ENCODE measurements at regions of chr10 and their contacts with region 1.

Region 1: GRCh38 chr10:73879296-73880173 is 5.2 kb upstream of the CAMK2G start:
- DNase-seq: peak; percentile 88 to 99 (median 95)
- ATAC-seq: peak; percentile 85 to 91 (median 90)
- H3K4me3 ChIP-seq: no peak overlapping the region
- H3K4me3 Mint-ChIP-seq: no peak overlapping the region
- H3K27ac ChIP-seq: peak overlapping the region; percentile 50
- H3K27ac Mint-ChIP-seq: peak overlapping the region; percentile 71 to 77
- H3K4me1 ChIP-seq: peaks cover 4 to 32% of the 10 kb centered on the region in 2 experiments
- H3K4me1 Mint-ChIP-seq: peaks cover 41 to 48% (median 43%) of the 10 kb centered on the region in 3 donors
- H3K27me3 ChIP-seq: no peaks in the 10 kb centered on the region
- H3K27me3 Mint-ChIP-seq: no peaks in the 10 kb centered on the region

Region 2: DNA sequence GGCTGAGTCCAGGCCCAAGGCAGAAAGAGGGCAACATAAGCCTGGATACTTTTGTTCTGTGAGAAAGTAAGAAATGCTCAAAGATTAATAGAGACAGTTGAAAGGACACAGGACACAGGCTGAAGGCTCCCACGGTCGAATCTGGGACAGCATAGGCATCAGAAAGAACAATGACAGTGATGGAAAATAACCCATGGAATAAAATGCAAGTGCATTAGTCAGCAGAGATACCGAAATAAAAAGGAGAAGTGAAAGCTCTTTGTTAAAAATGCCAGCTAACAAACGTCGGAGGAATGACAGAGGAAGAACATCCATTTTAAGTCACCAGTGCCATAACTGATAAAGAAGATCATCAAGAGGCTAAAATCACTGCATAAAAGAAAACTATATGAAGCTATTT is 162.0 kb before region 1 on chr10:
- CTCF ChIA-PET with region 1: no interaction called
- POLR2A ChIA-PET with region 1: no interaction called
- DNase-seq: no peak
- ATAC-seq: no peak
- H3K4me3 ChIP-seq: no peak overlapping the region
- H3K4me3 Mint-ChIP-seq: no peak overlapping the region
- H3K27ac ChIP-seq: no peak overlapping the region
- H3K27ac Mint-ChIP-seq: no peak overlapping the region
- H3K4me1 ChIP-seq: no peaks in the 10 kb centered on the region
- H3K4me1 Mint-ChIP-seq: peaks cover 0 to 3% (median 0%) of the 10 kb centered on the region in 3 donors
- H3K27me3 ChIP-seq: no peaks in the 10 kb centered on the region
- H3K27me3 Mint-ChIP-seq: no peaks in the 10 kb centered on the region

Region 3: DNA sequence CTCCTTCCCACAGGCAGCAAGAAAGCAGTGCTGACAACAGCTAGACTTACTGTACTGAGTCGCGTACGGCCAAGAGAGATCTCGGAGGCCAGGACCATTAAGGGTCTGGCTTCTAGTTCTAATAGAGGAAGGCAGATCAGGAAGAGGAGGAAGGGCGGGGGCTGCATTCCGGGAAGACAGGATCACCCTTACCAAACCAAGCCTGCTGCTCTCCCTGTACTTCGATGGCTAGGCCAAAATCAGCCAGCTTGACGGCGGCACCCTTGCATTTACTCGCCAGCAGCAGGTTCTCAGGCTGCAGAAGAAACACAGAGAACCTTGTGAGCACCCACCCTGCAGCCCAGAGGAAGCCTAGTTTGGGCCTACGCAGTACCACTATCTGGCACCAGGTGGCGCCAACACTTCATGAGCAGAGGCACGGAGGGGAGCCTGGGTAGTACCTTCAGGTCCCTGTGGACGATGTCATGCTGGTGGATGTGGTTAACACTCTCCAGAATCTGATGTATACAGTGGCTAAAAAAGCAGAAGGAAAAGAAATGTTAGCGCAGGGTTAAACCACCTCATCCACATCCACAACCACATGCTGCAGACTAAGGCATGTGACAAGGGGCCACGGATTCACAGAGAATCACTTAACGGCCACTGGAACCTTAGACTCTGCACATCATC is 30.6 kb before region 1 on chr10:
- CTCF ChIA-PET with region 1: interaction called, 77 to 80 read pairs
- POLR2A ChIA-PET with region 1: interaction called in 1 of 2 experiments, 6 read pairs
- DNase-seq: peak; percentile 78 to 95 (median 89)
- ATAC-seq: peak; percentile 99 to 100 (median 99)
- H3K4me3 ChIP-seq: no peak overlapping the region
- H3K4me3 Mint-ChIP-seq: peak overlapping the region in 1 of 3 donors; percentile 20
- H3K27ac ChIP-seq: peak overlapping the region; percentile 68
- H3K27ac Mint-ChIP-seq: peak overlapping the region; percentile 84 to 86
- H3K4me1 ChIP-seq: peaks cover 5 to 19% of the 10 kb centered on the region in 2 experiments
- H3K4me1 Mint-ChIP-seq: peaks cover 12 to 18% (median 15%) of the 10 kb centered on the region in 3 donors
- H3K27me3 ChIP-seq: no peaks in the 10 kb centered on the region
- H3K27me3 Mint-ChIP-seq: no peaks in the 10 kb centered on the region

Region 4: DNA sequence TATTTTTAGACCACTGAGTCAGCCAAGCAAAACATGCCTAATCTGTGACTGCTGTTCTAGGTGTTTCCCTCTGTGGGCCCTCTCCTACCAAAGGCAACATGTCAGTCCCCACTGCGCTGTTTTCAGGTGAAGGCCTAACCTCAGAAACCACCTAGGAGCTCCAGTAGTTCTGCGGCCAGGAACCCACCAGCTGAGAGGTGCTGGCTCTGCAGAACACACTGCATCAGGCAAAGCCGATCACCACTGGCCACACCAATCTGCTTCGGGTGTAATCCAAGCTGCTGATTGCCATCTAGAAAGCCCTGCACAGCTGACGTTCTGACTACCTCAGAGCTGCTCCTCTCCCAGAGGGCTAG is 20.1 kb before region 1 on chr10:
- CTCF ChIA-PET with region 1: interaction called, 3 to 21 read pairs
- POLR2A ChIA-PET with region 1: interaction called in 1 of 2 experiments, 5 read pairs
- DNase-seq: peak in 28 of 35 experiments; percentile 15 to 63 (median 30)
- ATAC-seq: peak; percentile 79 to 93 (median 82)
- H3K4me3 ChIP-seq: no peak overlapping the region
- H3K4me3 Mint-ChIP-seq: peak overlapping the region in 2 of 3 donors; percentile 43 to 51
- H3K27ac ChIP-seq: peak overlapping the region; percentile 67
- H3K27ac Mint-ChIP-seq: peak overlapping the region; percentile 94 to 95
- H3K4me1 ChIP-seq: peaks cover 4 to 72% of the 10 kb centered on the region in 2 experiments
- H3K4me1 Mint-ChIP-seq: peaks cover 69 to 87% (median 86%) of the 10 kb centered on the region in 3 donors
- H3K27me3 ChIP-seq: no peaks in the 10 kb centered on the region
- H3K27me3 Mint-ChIP-seq: no peaks in the 10 kb centered on the region

Region 5: DNA sequence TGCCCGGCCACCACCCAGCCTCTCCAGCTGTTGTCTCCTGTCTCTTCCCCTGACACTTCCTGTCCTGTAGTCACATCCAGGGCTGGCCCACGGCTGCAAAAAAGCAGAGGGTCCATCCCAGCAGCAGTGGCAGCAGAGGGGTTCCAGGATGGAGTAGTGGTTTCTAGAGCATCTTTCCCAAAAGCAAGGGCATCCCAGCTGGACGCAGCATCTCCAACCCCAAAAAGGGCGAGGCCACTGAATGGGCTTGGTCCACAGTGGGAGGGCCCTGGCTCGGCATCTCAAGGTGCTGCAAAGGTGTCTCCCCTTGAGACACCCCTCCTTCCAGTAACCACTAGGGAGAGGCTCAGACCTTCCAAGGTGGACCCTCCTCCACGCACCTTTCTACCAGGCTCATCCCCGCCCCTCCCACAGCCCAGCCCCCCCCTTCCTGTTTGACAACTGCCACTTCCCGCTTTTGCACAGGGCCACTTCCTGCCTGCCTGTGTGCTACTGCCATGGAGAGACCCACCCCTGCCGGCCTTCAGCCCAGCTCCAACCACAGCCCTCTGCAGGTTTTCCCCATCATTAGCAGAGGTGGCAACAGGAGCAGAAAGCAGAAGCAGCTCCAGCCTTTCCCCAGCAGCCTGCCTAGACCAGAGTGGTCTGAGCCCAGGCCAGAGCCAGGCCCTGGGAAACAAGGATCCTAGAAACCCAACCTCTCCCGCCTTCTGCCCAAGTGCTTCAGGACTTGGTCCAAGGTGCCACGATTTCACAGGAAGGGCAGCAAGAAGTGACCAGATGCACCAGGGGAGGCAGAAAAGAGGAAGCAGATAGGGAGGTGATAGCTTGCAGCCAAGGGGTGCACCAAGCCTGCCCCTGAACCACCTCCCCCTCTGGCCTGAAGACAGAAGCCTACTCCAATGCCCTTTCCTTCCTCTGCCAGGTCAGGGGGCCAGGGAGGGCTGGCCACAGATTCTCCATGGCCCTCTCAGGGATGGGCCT is 13.8 kb before region 1 on chr10:
- CTCF ChIA-PET with region 1: interaction called, 5 to 21 read pairs
- POLR2A ChIA-PET with region 1: interaction called in 1 of 2 experiments, 5 read pairs
- DNase-seq: peak in 34 of 35 experiments; percentile 28 to 67 (median 47)
- ATAC-seq: peak; percentile 82 to 91 (median 86)
- H3K4me3 ChIP-seq: peak overlapping the region; percentile 48 to 49
- H3K4me3 Mint-ChIP-seq: peak overlapping the region; percentile 75 to 89 (median 80)
- H3K27ac ChIP-seq: peak overlapping the region; percentile 80
- H3K27ac Mint-ChIP-seq: peak overlapping the region; percentile 97 to 98
- H3K4me1 ChIP-seq: peaks cover 21 to 84% of the 10 kb centered on the region in 2 experiments
- H3K4me1 Mint-ChIP-seq: peaks cover 78 to 94% (median 91%) of the 10 kb centered on the region in 3 donors
- H3K27me3 ChIP-seq: no peaks in the 10 kb centered on the region
- H3K27me3 Mint-ChIP-seq: no peaks in the 10 kb centered on the region

Region 6: DNA sequence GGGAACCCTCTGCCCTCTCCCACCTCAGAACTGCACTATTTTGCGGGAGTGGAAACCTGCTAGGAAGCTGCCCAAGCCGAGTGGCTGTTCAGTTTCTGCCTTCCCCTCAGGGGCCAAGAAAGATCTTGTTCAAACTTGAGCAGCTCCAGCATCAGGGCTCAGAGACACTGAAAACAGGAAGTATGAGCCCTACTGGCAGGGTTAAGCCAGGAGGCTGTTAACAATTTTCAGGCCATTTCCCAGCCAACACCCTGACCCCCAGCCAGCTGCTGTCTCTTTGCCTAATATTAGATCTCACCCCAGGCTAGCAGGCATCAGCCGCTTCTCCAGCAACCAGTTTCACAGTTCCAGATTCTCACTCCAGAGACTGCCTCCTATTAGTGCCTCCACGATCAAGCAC is 40.6 kb after region 1 on chr10:
- CTCF ChIA-PET with region 1: no interaction called
- POLR2A ChIA-PET with region 1: no interaction called
- DNase-seq: peak in 6 of 35 experiments; percentile 6 to 35 (median 20)
- ATAC-seq: peak; percentile 36 to 59 (median 48)
- H3K4me3 ChIP-seq: no peak overlapping the region
- H3K4me3 Mint-ChIP-seq: peak overlapping the region in 1 of 3 donors; percentile 78
- H3K27ac ChIP-seq: no peak overlapping the region
- H3K27ac Mint-ChIP-seq: peak overlapping the region in 1 of 2 donors; percentile 19
- H3K4me1 ChIP-seq: peaks cover 14 to 38% of the 10 kb centered on the region in 2 experiments
- H3K4me1 Mint-ChIP-seq: peaks cover 26 to 47% (median 39%) of the 10 kb centered on the region in 3 donors
- H3K27me3 ChIP-seq: peaks cover 0 to 35% of the 10 kb centered on the region in 2 experiments
- H3K27me3 Mint-ChIP-seq: peaks cover 17 to 23% of the 10 kb centered on the region in 2 donors

Region 7: DNA sequence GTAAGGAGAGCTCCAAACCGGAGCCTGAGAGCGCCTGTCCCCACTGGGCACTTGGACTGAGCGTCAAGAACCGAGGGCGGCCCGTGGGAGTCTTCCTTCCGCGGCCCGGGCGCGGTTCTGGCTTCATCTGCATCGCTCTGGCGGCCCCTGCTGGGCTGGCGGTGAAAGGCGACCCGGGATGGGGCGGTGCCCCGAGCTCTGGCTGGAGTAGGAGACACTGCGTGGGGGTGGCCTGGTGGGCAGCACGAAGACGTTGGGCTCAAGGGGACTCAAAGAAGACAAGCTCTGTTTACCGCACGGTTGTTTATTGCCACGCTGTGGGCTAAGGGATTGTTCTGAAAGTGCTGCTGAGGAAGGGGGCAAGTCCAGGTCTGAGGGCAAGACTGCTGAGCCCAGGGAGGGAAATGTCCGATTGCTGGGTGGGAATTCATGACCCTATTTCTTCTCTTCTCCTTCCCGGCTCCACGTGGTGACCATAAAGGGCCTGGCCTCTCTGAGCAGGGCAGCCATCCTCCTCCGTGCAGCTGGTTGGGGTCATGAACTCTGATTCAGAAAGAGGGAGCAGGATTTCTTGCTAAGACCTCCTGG is 61.2 kb after region 1 on chr10:
- CTCF ChIA-PET with region 1: interaction called, 24 to 35 read pairs
- POLR2A ChIA-PET with region 1: interaction called in 1 of 2 experiments, 3 read pairs
- DNase-seq: peak; percentile 53 to 88 (median 79)
- ATAC-seq: peak; percentile 98 to 100 (median 98)
- H3K4me3 ChIP-seq: peak overlapping the region in 1 of 2 donors; percentile 5
- H3K4me3 Mint-ChIP-seq: peak overlapping the region; percentile 36 to 37 (median 37)
- H3K27ac ChIP-seq: no peak overlapping the region
- H3K27ac Mint-ChIP-seq: peak overlapping the region in 1 of 2 donors; percentile 58
- H3K4me1 ChIP-seq: peaks cover 0 to 9% of the 10 kb centered on the region in 2 experiments
- H3K4me1 Mint-ChIP-seq: peaks cover 5 to 8% (median 7%) of the 10 kb centered on the region in 3 donors
- H3K27me3 ChIP-seq: peaks cover 0 to 2% of the 10 kb centered on the region in 2 experiments
- H3K27me3 Mint-ChIP-seq: no peaks in the 10 kb centered on the region

Region 8: GRCh38 chr10:73956476-73957359 is 77.2 kb after region 1 on chr10:
- CTCF ChIA-PET with region 1: interaction called, 9 to 10 read pairs
- POLR2A ChIA-PET with region 1: no interaction called
- DNase-seq: peak in 30 of 35 experiments; percentile 4 to 66 (median 22)
- ATAC-seq: peak; percentile 74 to 83 (median 79)
- H3K4me3 ChIP-seq: peak overlapping the region; percentile 17 to 25
- H3K4me3 Mint-ChIP-seq: peak overlapping the region; percentile 47 to 70 (median 67)
- H3K27ac ChIP-seq: peak overlapping the region; percentile 78
- H3K27ac Mint-ChIP-seq: peak overlapping the region; percentile 91 to 97
- H3K4me1 ChIP-seq: peaks cover 15 to 57% of the 10 kb centered on the region in 2 experiments
- H3K4me1 Mint-ChIP-seq: peaks cover 48 to 61% (median 54%) of the 10 kb centered on the region in 3 donors
- H3K27me3 ChIP-seq: no peaks in the 10 kb centered on the region
- H3K27me3 Mint-ChIP-seq: no peaks in the 10 kb centered on the region

Region 9: GRCh38 chr10:74081192-74081803 is 201.8 kb after region 1 on chr10:
- CTCF ChIA-PET with region 1: interaction called in 1 of 2 experiments, 11 read pairs
- POLR2A ChIA-PET with region 1: interaction called in 1 of 2 experiments, 3 read pairs
- DNase-seq: peak in 25 of 35 experiments; percentile 6 to 66 (median 23)
- ATAC-seq: peak; percentile 53 to 73 (median 63)
- H3K4me3 ChIP-seq: no peak overlapping the region
- H3K4me3 Mint-ChIP-seq: no peak overlapping the region
- H3K27ac ChIP-seq: no peak overlapping the region
- H3K27ac Mint-ChIP-seq: peak overlapping the region in 1 of 2 donors; percentile 29
- H3K4me1 ChIP-seq: no peaks in the 10 kb centered on the region
- H3K4me1 Mint-ChIP-seq: peaks cover 9 to 38% (median 31%) of the 10 kb centered on the region in 3 donors
- H3K27me3 ChIP-seq: no peaks in the 10 kb centered on the region
- H3K27me3 Mint-ChIP-seq: no peaks in the 10 kb centered on the region

Region 10: DNA sequence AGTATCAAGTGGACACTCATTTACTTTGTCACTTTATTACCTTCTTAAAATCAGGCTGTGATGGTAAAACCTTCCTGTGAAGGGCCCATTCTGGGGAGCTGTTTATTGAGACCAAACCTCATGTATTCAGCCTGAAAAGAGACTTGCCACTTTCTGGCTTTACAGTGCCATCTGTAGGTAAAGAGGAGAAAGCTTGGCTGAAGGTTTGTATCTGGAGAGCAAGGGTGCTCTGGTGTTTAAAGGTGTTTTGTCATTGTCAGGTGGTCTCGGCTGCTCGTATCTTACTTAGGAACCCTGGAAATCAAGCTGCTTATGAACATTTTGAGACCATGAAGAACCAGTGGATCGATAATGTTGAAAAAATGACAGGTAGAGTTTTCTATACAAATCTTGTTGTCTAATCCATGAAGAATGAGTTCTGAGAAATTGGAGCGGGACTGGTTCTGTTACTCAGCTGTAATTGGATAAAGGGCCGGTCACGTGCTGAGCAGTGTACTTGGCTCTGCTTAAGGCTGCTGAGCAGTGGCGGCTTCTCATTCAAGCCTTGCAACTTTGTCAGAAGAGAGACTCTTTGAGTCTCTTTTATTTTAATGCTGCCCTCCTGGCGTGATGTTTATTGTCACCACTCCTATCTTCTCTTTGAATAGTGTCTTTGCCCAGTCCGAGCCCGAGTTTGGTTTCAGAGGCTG is 224.2 kb after region 1 on chr10:
- CTCF ChIA-PET with region 1: no interaction called
- POLR2A ChIA-PET with region 1: no interaction called
- DNase-seq: peak in 1 of 35 experiments; percentile 24
- ATAC-seq: no peak
- H3K4me3 ChIP-seq: no peak overlapping the region
- H3K4me3 Mint-ChIP-seq: no peak overlapping the region
- H3K27ac ChIP-seq: no peak overlapping the region
- H3K27ac Mint-ChIP-seq: no peak overlapping the region
- H3K4me1 ChIP-seq: no peaks in the 10 kb centered on the region
- H3K4me1 Mint-ChIP-seq: peaks cover 0 to 3% (median 0%) of the 10 kb centered on the region in 3 donors
- H3K27me3 ChIP-seq: no peaks in the 10 kb centered on the region
- H3K27me3 Mint-ChIP-seq: no peaks in the 10 kb centered on the region